ENCODE measurements at regions of chr6 and their contacts with region 1.

Region 1: GRCh38 chr6:138001750-138002349 is 105.4 kb downstream of the PERP start:
- DNase-seq: peak; percentile 85
- ATAC-seq: peak; percentile 56
- H3K4me3 Mint-ChIP-seq: no peak overlapping the region
- H3K27ac Mint-ChIP-seq: no peak overlapping the region
- H3K4me1 Mint-ChIP-seq: peaks cover 17% of the 10 kb centered on the region
- H3K27me3 Mint-ChIP-seq: no peaks in the 10 kb centered on the region
- CTCF ChIP-seq: peak; percentile 92

Region 2: DNA sequence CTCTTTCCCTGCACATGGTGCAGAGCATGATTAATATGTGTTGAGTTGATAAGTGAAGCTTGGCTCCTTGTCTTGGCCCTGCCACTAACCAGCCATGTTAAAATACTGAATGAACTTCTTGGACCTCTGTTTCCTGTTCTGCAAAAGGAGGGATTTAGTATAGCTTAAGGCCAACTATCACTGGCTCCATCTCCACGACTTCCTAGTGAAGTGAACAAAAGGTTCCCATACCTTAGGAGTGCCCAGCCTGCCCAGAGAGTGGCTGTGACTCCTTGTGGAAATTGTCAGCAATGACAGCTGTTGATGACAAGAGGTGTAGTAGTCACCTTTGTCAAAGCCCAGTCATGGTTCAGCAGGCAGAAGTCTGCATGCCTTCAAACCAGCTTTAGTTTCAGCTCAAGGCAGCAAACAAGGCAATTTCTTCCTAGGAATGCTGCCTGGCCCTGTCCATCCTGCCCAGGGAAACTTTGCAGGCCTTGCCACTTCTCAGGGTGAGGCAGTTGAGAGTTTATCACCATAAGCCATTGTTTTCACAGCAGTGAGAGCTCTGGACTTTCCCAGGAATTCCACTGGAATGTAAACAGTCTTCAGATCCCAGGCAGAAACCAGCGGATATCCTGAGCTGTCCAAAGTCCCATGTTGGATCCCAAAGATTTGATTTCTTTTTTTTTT is 304.4 kb before region 1 on chr6:
- CTCF ChIA-PET with region 1: interaction called, 48 read pairs
- POLR2A ChIA-PET with region 1: no interaction called
- intact Hi-C with region 1: no loop called
- DNase-seq: no peak
- ATAC-seq: peak; percentile 29
- H3K4me3 Mint-ChIP-seq: no peak overlapping the region
- H3K27ac Mint-ChIP-seq: peak overlapping the region; percentile 55
- H3K4me1 Mint-ChIP-seq: peaks cover 43% of the 10 kb centered on the region
- H3K27me3 Mint-ChIP-seq: peaks cover 8% of the 10 kb centered on the region
- CTCF ChIP-seq: no peak

Region 3: GRCh38 chr6:137933696-137934095 is 68.2 kb before region 1 on chr6:
- CTCF ChIA-PET with region 1: interaction called, 10 read pairs
- POLR2A ChIA-PET with region 1: no interaction called
- intact Hi-C with region 1: no loop called
- DNase-seq: no peak
- ATAC-seq: no peak
- H3K4me3 Mint-ChIP-seq: no peak overlapping the region
- H3K27ac Mint-ChIP-seq: peak overlapping the region; percentile 49
- H3K4me1 Mint-ChIP-seq: peaks cover 45% of the 10 kb centered on the region
- H3K27me3 Mint-ChIP-seq: no peaks in the 10 kb centered on the region
- CTCF ChIP-seq: no peak

Region 4: GRCh38 chr6:137975188-137975940 is 26.5 kb before region 1 on chr6:
- CTCF ChIA-PET with region 1: interaction called, 16 read pairs
- POLR2A ChIA-PET with region 1: no interaction called
- intact Hi-C with region 1: no loop called
- DNase-seq: peak; percentile 64
- ATAC-seq: peak; percentile 69
- H3K4me3 Mint-ChIP-seq: peak overlapping the region; percentile 70
- H3K27ac Mint-ChIP-seq: peak overlapping the region; percentile 94
- H3K4me1 Mint-ChIP-seq: peaks cover 70% of the 10 kb centered on the region
- H3K27me3 Mint-ChIP-seq: no peaks in the 10 kb centered on the region
- CTCF ChIP-seq: peak; percentile 82

Region 5: GRCh38 chr6:138109042-138109997 is 107.5 kb after region 1 on chr6:
- CTCF ChIA-PET with region 1: interaction called, 111 read pairs
- POLR2A ChIA-PET with region 1: no interaction called
- intact Hi-C with region 1: loop called (anchors 2 kb)
- DNase-seq: peak; percentile 93
- ATAC-seq: peak; percentile 69
- H3K4me3 Mint-ChIP-seq: no peak overlapping the region
- H3K27ac Mint-ChIP-seq: no peak overlapping the region
- H3K4me1 Mint-ChIP-seq: peaks cover 16% of the 10 kb centered on the region
- H3K27me3 Mint-ChIP-seq: peaks cover 38% of the 10 kb centered on the region
- CTCF ChIP-seq: peak; percentile 87